ENCODE measurements at regions of chr16 and their contacts with region 1.

Region 1: DNA sequence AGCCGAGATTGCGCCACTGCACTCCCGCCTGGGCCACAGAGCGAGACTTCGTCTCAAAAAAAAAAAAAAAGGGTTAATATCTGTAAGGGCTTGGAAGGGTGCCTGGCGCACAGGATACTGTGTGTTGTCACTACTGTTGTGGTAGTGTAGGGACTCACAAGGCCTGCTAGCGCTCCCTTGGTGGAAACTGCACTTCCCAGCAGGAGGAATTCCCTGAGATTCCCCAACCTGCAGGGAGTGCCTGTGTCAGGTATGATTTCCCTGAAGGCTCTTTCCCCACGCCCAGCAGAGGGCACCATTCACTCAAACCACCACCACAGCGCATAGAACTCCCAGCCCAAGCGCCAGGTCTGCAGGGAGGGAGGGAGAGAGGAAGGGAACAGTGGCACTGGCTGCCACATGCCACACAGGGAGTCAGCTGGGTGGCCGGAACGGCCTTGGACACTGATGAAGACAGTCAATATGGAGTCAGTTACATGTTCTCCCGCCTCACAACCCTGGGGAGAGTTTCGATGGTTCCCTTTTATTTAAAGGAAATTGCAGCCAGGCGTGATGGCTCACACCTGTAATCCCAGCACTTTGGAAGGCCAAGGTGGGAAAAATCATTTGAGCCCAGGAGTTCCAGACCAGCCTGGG is 32.7 kb upstream of the CDH1 start:
- DNase-seq: peak; percentile 48
- ATAC-seq: peak; percentile 91
- H3K4me3 ChIP-seq: no peak overlapping the region
- H3K27ac ChIP-seq: no peak overlapping the region
- H3K4me1 ChIP-seq: peaks cover 4% of the 10 kb centered on the region; the same call in 1 of the 2 replicates
- H3K27me3 ChIP-seq: no peaks in the 10 kb centered on the region; the same call in none of the 2 replicates
- CTCF ChIP-seq: peak; percentile 65
- POLR2A ChIP-seq: no peak
- RAD21 ChIP-seq: peak; percentile 69

Region 2: DNA sequence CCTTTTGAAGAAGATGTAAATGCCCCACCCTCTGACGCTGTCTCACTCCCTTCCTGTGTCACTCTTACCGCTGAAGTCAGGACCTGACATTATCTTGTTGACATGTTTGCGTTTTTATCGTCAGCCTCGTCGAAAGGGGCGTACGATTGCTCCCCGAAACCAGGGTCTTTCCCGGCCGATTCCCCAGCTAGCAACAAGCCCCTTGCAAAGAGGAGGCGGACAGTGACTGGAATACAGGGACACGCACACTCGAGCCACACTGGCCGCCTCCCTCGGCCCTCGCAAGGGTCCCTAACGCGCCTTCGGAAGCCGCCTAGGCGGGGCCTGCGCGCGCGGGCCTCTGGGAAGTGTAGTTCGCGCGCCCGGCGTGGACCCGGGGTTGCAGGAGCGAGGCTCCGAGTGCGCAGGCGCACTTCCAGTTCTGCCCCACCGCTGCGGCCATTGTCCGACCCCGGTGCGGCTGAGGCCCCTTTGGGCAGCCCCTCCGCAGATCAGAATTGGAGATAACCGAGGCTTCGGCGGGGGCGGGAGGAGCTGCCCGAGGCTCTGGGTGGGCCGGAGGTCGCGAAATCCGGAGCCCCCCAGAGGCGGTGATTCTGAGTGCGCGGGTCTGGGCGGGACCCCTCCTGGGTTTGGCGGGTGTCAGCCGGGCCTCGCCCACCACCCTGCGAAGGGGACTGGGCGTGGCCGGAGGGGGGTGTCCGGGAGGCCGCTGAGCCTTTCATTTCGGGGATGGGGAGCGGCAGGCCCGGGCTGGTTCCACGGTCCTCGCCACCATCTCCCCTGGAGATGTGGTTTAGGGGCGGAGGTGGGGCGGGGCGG is 165.3 kb before region 1 on chr16 and contains the start of gene ZFP90:
- CTCF ChIA-PET with region 1: no interaction called
- POLR2A ChIA-PET with region 1: no interaction called
- dilution Hi-C with region 1: no loop called
- in situ Hi-C with region 1: no loop called
- intact Hi-C with region 1: loop called (anchors 10 kb)
- DNase-seq: peak; percentile 78
- ATAC-seq: peak; percentile 98
- H3K4me3 ChIP-seq: peak within 1 kb of the TSS; percentile 55
- H3K27ac ChIP-seq: peak within 1 kb of the TSS; percentile 70
- H3K4me1 ChIP-seq: peaks cover 3% of the 10 kb centered on the region; the same call in 1 of the 2 replicates
- H3K27me3 ChIP-seq: no peaks in the 10 kb centered on the region
- CTCF ChIP-seq: no peak
- POLR2A ChIP-seq: no peak
- RAD21 ChIP-seq: no peak
- total RNA-seq, gene ZFP90: 17.2 and 22.6 TPM in 2 replicates

Region 3: DNA sequence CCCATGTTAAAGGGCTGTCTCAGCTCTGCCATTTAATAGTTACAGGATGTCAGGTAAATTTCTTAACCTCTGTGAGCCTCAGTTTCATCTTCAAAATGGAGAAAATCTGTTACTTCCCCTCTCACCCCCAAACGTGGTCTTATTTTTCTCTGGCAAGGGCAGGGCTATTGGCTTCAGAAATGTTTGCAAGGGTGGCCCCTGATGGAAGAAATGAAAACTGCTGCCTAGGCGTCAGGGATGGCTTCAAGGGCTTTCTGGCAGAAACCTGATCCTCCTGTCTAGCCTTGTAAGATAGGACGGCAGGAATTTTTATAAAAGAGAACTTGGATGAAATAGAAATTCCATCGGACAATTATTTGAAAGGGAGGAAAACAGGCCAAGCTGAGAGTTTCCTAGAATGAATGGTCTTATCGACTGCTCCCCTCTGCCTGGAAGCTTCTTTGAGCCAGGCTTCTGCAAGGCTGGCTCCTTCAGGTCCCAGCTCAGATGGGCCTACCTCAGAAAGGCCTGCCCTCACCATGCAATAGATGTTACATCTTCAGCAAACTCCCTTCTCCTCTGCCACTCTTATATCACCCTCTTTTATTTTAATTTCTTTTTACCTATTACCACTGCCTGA is 96.0 kb after region 1 on chr16:
- CTCF ChIA-PET with region 1: interaction called, 3 read pairs
- POLR2A ChIA-PET with region 1: no interaction called
- dilution Hi-C with region 1: no loop called
- in situ Hi-C with region 1: no loop called
- intact Hi-C with region 1: loop called (anchors 1 kb)
- DNase-seq: peak; percentile 83
- ATAC-seq: peak; percentile 97
- H3K4me3 ChIP-seq: no peak overlapping the region
- H3K27ac ChIP-seq: no peak overlapping the region
- H3K4me1 ChIP-seq: peaks cover 2% of the 10 kb centered on the region; the same call in 1 of the 2 replicates
- H3K27me3 ChIP-seq: peaks cover 6% of the 10 kb centered on the region
- CTCF ChIP-seq: peak; percentile 77
- POLR2A ChIP-seq: no peak
- RAD21 ChIP-seq: peak; percentile 61

Region 4: DNA sequence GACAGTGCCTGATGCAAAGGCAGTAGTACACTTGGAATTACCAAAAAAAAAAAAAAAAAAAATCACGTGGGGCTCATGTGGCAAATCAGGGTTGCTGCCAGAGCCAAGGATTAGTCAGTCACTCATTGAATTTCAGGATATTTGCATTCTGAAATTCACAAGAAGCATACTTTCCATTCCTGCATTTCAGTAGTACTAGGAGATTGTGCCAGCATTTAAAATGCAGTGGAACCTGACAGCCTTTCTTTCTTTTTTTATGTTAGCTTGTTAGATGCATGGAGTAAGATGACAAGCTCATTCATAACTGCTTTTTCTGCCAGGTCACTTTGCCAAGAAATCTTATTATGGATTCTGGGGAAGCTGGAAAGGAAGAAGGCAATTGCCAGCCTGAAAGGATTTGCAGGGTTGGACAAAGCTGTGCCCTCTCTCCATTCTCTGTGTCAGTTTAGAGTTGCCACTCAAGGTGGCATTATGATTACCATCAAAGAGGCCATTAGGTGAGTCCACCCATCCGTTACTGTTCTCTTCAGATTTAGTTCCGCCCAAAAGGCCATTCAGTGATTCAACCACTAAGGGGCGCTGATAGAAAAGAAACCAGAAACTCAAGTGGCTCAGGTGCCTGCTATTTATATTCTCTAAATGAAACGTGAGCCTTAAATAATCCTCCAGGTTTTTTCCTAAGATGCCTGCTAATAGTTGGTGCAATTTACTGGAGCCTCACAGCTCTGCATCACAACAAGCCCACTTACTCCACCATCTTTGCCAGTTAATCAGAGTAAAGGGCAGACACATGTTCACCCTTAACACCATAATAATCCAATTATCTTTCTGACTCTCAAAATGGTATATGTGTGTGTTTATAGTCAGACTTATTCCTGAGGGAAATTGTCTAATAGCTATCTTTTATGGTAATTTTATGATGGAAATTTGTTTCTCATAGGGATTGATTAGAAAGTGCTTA is 197.9 kb after region 1 on chr16:
- CTCF ChIA-PET with region 1: no interaction called
- POLR2A ChIA-PET with region 1: no interaction called
- dilution Hi-C with region 1: no loop called
- in situ Hi-C with region 1: no loop called
- intact Hi-C with region 1: loop called (anchors 1 kb)
- DNase-seq: peak; percentile 77
- ATAC-seq: peak; percentile 81
- H3K4me3 ChIP-seq: no peak overlapping the region
- H3K27ac ChIP-seq: peak overlapping the region; percentile 34; the same call in 1 of the 2 replicates
- H3K4me1 ChIP-seq: peaks cover 2% of the 10 kb centered on the region
- H3K27me3 ChIP-seq: no peaks in the 10 kb centered on the region
- CTCF ChIP-seq: peak; percentile 82
- POLR2A ChIP-seq: no peak
- RAD21 ChIP-seq: peak; percentile 86

Region 5: DNA sequence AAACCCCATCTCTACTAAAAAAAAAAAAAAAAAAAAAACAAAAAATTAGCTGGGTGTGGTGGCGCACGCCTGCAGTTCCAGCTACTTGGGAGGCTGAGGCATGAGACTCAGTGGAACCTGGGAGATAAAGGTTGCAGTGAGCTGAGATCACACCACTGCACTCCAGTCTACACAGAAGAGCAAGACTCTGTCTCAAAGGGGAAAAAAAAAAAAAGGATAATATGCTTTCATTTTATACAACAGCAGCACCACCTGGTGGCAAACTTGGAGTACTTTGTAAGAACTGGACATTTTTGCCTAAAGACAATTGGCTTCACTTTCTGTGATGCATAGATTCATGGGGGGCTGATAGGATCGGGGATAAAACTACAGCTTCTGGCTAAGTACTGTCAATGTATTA is 419.6 kb after region 1 on chr16:
- CTCF ChIA-PET with region 1: no interaction called
- POLR2A ChIA-PET with region 1: no interaction called
- dilution Hi-C with region 1: no loop called
- in situ Hi-C with region 1: loop called (anchors 10 kb)
- intact Hi-C with region 1: loop called (anchors 2 kb)
- DNase-seq: peak; percentile 76
- ATAC-seq: peak; percentile 81
- H3K4me3 ChIP-seq: no peak overlapping the region
- H3K27ac ChIP-seq: no peak overlapping the region
- H3K4me1 ChIP-seq: no peaks in the 10 kb centered on the region
- H3K27me3 ChIP-seq: no peaks in the 10 kb centered on the region
- CTCF ChIP-seq: peak; percentile 81
- POLR2A ChIP-seq: 0 out of 2 replicates have a peak, but pooled peaks have one; percentile 30
- RAD21 ChIP-seq: peak; percentile 86

Region 6: GRCh38 chr16:69367980-69368379 is 663.6 kb after region 1 on chr16:
- CTCF ChIA-PET with region 1: no interaction called
- POLR2A ChIA-PET with region 1: no interaction called
- dilution Hi-C with region 1: no loop called
- in situ Hi-C with region 1: no loop called
- intact Hi-C with region 1: no loop called
- DNase-seq: peak; percentile 71
- ATAC-seq: no peak; the same call in none of the 2 replicates
- H3K4me3 ChIP-seq: no peak overlapping the region
- H3K27ac ChIP-seq: no peak overlapping the region
- H3K4me1 ChIP-seq: no peaks in the 10 kb centered on the region; the same call in 1 of the 2 replicates
- H3K27me3 ChIP-seq: no peaks in the 10 kb centered on the region
- CTCF ChIP-seq: no peak
- POLR2A ChIP-seq: no peak
- RAD21 ChIP-seq: no peak

Measured in IMR-90 (cell line).